Mammary epithelial cell (primary cell): ENCODE measurements at regions of chr22 and their contacts with region 1.

Region 1: DNA sequence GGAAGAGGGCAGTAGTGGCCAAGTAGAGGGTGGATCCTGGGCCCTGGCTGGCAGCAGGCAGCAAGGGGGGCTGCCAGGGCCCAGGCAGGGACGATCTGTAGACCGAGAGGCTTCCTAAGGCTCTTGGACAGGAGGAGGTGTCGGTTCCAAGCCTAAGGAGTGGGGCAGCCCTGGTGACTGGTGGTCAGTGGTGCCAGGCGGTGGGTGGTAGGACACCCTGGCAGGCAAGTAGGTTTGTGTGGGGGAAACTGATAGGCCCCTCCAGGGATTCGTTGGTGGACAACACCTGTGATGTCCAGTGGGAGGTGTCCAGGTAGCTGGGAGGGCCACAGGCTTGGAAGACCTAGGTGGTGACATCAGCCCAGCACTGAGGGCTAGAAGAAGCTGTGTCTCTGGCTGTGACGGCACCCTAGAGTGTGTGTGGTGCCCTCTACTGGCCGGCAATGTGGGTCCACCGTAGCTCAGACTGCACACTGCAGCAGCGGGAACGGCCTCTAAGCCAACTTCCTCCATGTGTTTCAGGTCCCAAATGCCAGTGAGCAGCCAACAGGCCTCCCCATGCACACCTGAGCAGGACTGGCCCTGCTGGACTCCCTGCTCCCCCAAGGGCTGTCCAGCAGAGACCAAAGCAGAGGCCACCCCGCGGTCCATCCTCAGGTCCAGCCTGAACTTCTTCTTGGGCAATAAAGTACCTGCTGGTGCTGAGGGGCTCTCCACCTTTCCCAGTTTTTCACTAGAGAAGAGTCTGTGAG is 9.4 kb upstream of the SAMM50 start:
- DNase-seq: peak; percentile 36
- H3K4me3 ChIP-seq: no peak overlapping the region
- H3K27ac ChIP-seq: no peak overlapping the region
- H3K4me1 ChIP-seq: no peaks in the 10 kb centered on the region
- H3K27me3 ChIP-seq: no peaks in the 10 kb centered on the region
- CTCF ChIP-seq: peak; percentile 80 to 87

Region 2: GRCh38 chr22:43884600-43885325 is 61.0 kb before region 1 on chr22:
- CTCF ChIA-PET with region 1: interaction called, 30 read pairs
- dilution Hi-C with region 1: no loop called
- in situ Hi-C with region 1: no loop called
- intact Hi-C with region 1: loop called (anchors 1 kb)
- DNase-seq: peak; percentile 23
- H3K4me3 ChIP-seq: no peak overlapping the region
- H3K27ac ChIP-seq: no peak overlapping the region
- H3K4me1 ChIP-seq: no peaks in the 10 kb centered on the region
- H3K27me3 ChIP-seq: no peaks in the 10 kb centered on the region
- CTCF ChIP-seq: peak; percentile 76 to 89

Region 3: DNA sequence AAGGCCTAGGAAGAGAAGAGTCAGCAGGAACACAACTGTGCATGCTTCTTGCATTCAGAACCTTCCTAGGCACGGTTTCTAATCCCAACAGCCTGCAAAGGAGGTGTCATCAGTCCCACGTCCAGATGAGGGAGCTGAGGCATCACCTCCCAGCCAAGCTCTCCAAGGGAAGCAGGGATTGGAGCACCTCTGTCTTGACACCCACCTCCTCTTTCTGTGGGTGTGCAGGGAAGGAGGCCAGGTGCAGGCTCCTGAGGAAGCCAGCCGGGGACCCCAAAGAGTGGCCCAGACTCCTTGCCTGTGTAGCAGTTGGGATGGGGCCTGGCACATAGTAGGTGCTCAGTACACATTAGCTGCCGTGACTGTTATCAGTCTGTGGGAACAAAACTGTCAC is 56.0 kb before region 1 on chr22:
- CTCF ChIA-PET with region 1: interaction called, 6 read pairs
- dilution Hi-C with region 1: no loop called
- in situ Hi-C with region 1: loop called in 1 of 2 experiments (anchors 10 kb)
- intact Hi-C with region 1: loop called (anchors 2 kb)
- DNase-seq: peak; percentile 21
- H3K4me3 ChIP-seq: no peak overlapping the region
- H3K27ac ChIP-seq: no peak overlapping the region
- H3K4me1 ChIP-seq: peaks cover 12% of the 10 kb centered on the region
- H3K27me3 ChIP-seq: peaks cover 6% of the 10 kb centered on the region
- CTCF ChIP-seq: peak; percentile 22 to 73